Activated naive CD4-positive, alpha-beta T cell treated with anti-CD3 and anti-CD28 coated beads for 36 hours (primary cell): ENCODE measurements at regions of chr5 and their contacts with region 1.

Region 1: DNA sequence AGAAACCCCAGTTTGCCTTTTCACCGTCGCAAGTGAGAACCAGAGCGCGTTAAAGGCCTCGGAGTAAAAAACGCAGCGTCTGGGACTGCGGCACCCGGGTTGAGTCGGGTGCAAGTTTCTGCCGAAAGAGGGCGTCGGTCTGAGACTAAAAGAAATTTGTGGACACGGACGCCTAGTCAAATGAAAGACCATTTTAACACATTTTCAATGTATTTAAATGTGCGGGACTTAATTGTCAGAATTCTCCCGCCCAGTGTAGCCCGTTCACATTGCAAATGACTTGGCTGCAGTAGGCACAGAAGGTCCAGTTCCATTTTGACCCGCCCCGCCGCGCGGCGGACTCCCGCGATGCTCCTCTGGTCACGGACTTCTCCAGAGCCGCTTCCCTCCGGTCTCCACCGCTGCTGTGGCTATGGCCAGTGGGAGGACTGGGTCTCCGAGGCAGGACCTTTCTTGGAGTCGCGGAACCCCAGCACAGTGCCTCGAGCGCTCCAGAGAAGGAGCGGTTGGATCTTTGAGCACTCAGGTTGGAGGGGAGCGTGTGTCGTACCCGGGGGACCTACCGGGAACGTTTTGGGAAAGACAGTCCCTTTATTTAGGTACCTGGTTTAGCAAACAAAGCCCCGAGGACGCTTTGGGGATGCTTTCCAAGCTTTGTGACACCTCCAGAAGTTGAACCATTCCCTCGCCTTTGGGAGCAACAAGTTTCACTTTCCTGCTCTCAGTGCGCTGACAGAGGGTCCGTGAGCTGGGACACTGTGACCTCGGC is 1.2 kb upstream of the NPR3 start:
- DNase-seq: peak; percentile 75
- H3K4me3 Mint-ChIP-seq: peak overlapping the region; percentile 65
- H3K27ac Mint-ChIP-seq: no peak overlapping the region
- H3K4me1 Mint-ChIP-seq: peaks cover 26% of the 10 kb centered on the region
- H3K27me3 Mint-ChIP-seq: peaks cover 62% of the 10 kb centered on the region

Region 2: GRCh38 chr5:32646061-32646969 is 63.6 kb before region 1 on chr5:
- CTCF ChIA-PET with region 1: no interaction called
- intact Hi-C with region 1: no loop called
- DNase-seq: no peak
- H3K4me3 Mint-ChIP-seq: no peak overlapping the region
- H3K27ac Mint-ChIP-seq: no peak overlapping the region
- H3K4me1 Mint-ChIP-seq: no peaks in the 10 kb centered on the region
- H3K27me3 Mint-ChIP-seq: no peaks in the 10 kb centered on the region

Region 3: GRCh38 chr5:32767948-32768427 is 58.0 kb after region 1 on chr5:
- CTCF ChIA-PET with region 1: no interaction called
- intact Hi-C with region 1: no loop called
- DNase-seq: no peak
- H3K4me3 Mint-ChIP-seq: no peak overlapping the region
- H3K27ac Mint-ChIP-seq: no peak overlapping the region
- H3K4me1 Mint-ChIP-seq: no peaks in the 10 kb centered on the region
- H3K27me3 Mint-ChIP-seq: peaks cover 1% of the 10 kb centered on the region

Region 4: GRCh38 chr5:32916648-32917047 is 206.7 kb after region 1 on chr5:
- CTCF ChIA-PET with region 1: no interaction called
- intact Hi-C with region 1: loop called (anchors 1 kb)
- DNase-seq: no peak
- H3K4me3 Mint-ChIP-seq: no peak overlapping the region
- H3K27ac Mint-ChIP-seq: no peak overlapping the region
- H3K4me1 Mint-ChIP-seq: no peaks in the 10 kb centered on the region
- H3K27me3 Mint-ChIP-seq: no peaks in the 10 kb centered on the region

Region 5: GRCh38 chr5:33299621-33300208 is 589.8 kb after region 1 on chr5:
- CTCF ChIA-PET with region 1: no interaction called
- intact Hi-C with region 1: loop called (anchors 1 kb)
- DNase-seq: peak; percentile 7
- H3K4me3 Mint-ChIP-seq: no peak overlapping the region
- H3K27ac Mint-ChIP-seq: no peak overlapping the region
- H3K4me1 Mint-ChIP-seq: peaks cover 12% of the 10 kb centered on the region
- H3K27me3 Mint-ChIP-seq: peaks cover 11% of the 10 kb centered on the region

Region 6: GRCh38 chr5:33423018-33423630 is 713.2 kb after region 1 on chr5:
- CTCF ChIA-PET with region 1: interaction called, 3 read pairs
- intact Hi-C with region 1: loop called (anchors 1 kb)
- DNase-seq: no peak
- H3K4me3 Mint-ChIP-seq: no peak overlapping the region
- H3K27ac Mint-ChIP-seq: no peak overlapping the region
- H3K4me1 Mint-ChIP-seq: no peaks in the 10 kb centered on the region
- H3K27me3 Mint-ChIP-seq: peaks cover 9% of the 10 kb centered on the region